ENCODE measurements at regions of chr1 and their contacts with region 1.

Region 1: GRCh38 chr1:51847294-51847920 is 31.1 kb downstream of the NRDC start:
- DNase-seq: no peak
- CTCF ChIP-seq: no peak

Region 2: DNA sequence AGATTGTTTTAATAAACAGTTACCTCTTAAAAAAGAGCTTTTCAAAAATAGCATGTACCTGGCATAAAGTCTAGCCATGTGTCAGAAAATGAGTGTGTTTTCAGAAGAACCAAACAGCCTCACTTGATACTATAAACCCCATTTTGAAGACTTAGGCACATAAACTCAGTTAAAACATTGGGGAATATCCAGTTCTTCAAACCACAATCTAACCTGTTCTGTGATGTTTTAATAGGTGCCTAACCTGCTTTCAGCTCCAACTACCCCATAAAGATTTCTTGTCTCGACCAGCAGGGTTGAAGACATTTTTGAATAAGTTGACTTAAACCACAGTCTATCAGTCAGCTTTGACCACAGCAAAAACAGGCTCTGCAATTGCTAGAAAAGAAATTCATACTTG is 10.2 kb before region 1 on chr1:
- CTCF ChIA-PET with region 1: interaction called, 14 read pairs
- POLR2A ChIA-PET with region 1: no interaction called
- DNase-seq: no peak
- CTCF ChIP-seq: no peak

Region 3: DNA sequence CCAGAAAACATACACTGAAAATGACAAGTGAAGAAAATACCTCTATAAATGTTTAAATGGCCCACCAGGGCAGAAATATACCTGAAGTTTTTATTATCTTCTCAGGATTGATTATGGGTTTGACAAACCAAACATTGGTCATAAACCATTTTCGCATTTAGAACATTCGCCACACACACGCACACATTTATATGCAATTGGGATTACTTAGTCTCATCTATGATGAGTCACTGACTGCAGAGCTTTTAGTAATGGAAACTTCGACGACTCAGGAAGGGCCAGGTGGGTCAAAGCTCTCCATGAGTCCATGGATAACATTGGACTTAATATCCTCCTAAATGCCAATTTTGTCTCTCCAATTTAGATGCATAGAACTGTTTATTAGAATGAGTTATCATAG is 14.3 kb after region 1 on chr1:
- CTCF ChIA-PET with region 1: no interaction called
- POLR2A ChIA-PET with region 1: no interaction called
- DNase-seq: no peak
- CTCF ChIP-seq: no peak